Prostate gland (tissue), 2 donors: ENCODE measurements at regions of chr6 and their contacts with region 1.

Region 1: GRCh38 chr6:151451950-151452749 is at the start of gene RMND1:
- DNase-seq: peak; percentile 100
- H3K4me3 ChIP-seq: peak within 1 kb of the TSS; percentile 61 to 80
- H3K27ac ChIP-seq: peak within 1 kb of the TSS; percentile 89
- H3K4me1 ChIP-seq: peaks cover 6% of the 10 kb centered on the region
- H3K27me3 ChIP-seq: no peaks in the 10 kb centered on the region
- CTCF ChIP-seq: peak in 2 of 4 experiments; percentile 3 to 10
- POLR2A ChIP-seq: peak; percentile 68
- total RNA-seq, gene RMND1: 17.1 to 22.9 TPM

Region 2: GRCh38 chr6:151379933-151380847 is 72.0 kb before region 1 on chr6:
- intact Hi-C with region 1: no loop called
- DNase-seq: no peak
- H3K4me3 ChIP-seq: no peak overlapping the region
- H3K27ac ChIP-seq: no peak overlapping the region
- H3K4me1 ChIP-seq: no peaks in the 10 kb centered on the region
- H3K27me3 ChIP-seq: no peaks in the 10 kb centered on the region
- CTCF ChIP-seq: no peak
- POLR2A ChIP-seq: no peak

Region 3: GRCh38 chr6:151391366-151392037 is 60.6 kb before region 1 on chr6 and contains the start of gene ZBTB2:
- intact Hi-C with region 1: loop called (anchors 2 kb)
- DNase-seq: peak; percentile 59
- H3K4me3 ChIP-seq: peak within 1 kb of the TSS; percentile 96
- H3K27ac ChIP-seq: peak within 1 kb of the TSS; percentile 99 to 100
- H3K4me1 ChIP-seq: peaks cover 12% of the 10 kb centered on the region
- H3K27me3 ChIP-seq: no peaks in the 10 kb centered on the region
- CTCF ChIP-seq: no peak
- POLR2A ChIP-seq: peak; percentile 23
- total RNA-seq, gene ZBTB2: 8.1 to 13.6 TPM

Region 4: GRCh38 chr6:151409260-151409659 is 42.9 kb before region 1 on chr6:
- intact Hi-C with region 1: loop called (anchors 5 kb)
- DNase-seq: no peak
- H3K4me3 ChIP-seq: no peak overlapping the region
- H3K27ac ChIP-seq: no peak overlapping the region
- H3K4me1 ChIP-seq: no peaks in the 10 kb centered on the region
- H3K27me3 ChIP-seq: no peaks in the 10 kb centered on the region
- CTCF ChIP-seq: no peak
- POLR2A ChIP-seq: no peak

Region 5: GRCh38 chr6:151546941-151547659 is 95.0 kb after region 1 on chr6:
- intact Hi-C with region 1: no loop called
- DNase-seq: no peak
- H3K4me3 ChIP-seq: no peak overlapping the region
- H3K27ac ChIP-seq: no peak overlapping the region
- H3K4me1 ChIP-seq: no peaks in the 10 kb centered on the region
- H3K27me3 ChIP-seq: no peaks in the 10 kb centered on the region
- CTCF ChIP-seq: no peak
- POLR2A ChIP-seq: no peak

Region 6: GRCh38 chr6:151609553-151609979 is 157.4 kb after region 1 on chr6:
- intact Hi-C with region 1: no loop called
- DNase-seq: no peak
- H3K4me3 ChIP-seq: no peak overlapping the region
- H3K27ac ChIP-seq: no peak overlapping the region
- H3K4me1 ChIP-seq: no peaks in the 10 kb centered on the region
- H3K27me3 ChIP-seq: no peaks in the 10 kb centered on the region
- CTCF ChIP-seq: no peak
- POLR2A ChIP-seq: no peak